ENCODE measurements at regions of chr20 and their contacts with region 1.

Region 1: DNA sequence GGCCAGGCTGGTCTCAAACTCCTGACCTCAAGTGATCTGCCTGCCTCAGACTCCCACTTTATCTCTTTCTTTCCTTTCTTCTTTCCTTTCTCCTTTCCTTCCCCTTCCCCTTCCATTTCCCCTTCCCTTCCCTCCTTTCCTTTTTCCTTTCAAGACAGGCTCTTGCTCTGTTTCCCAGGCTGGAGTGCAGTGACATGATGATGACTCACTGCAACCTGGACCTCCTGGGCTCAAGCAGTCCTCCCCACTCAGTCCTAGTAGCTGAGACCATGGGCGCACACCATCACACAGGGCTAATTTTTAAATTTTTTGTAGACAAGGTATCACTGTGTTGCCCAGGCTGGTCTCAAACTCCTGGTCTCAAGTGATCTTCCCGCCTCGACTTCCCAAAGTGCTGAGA is 377.6 kb upstream of the ZFP64 start:
- DNase-seq: no peak
- H3K4me3 ChIP-seq: no peak overlapping the region
- CTCF ChIP-seq: no peak

Region 2: DNA sequence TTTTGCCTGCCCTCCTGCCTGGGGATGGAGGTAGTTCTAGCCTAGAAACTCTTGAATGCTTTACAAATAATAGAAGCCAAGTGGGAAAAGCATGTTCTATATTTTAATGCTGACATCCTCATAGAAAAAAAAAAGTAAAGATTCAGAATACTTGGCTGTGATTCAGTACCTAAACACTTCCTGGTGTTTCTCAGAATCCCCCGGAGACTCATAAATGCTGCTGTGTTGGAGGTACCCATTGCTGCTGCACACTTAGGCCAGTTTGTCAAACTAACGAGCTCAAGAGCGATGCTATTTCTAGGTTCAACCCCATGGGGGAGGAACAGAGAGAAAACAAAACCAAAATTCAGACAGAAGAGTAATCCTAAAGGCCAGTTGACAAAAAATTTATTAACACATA is 338.8 kb before region 1 on chr20:
- in situ Hi-C with region 1: no loop called
- DNase-seq: no peak
- H3K4me3 ChIP-seq: no peak overlapping the region
- CTCF ChIP-seq: no peak

Region 3: DNA sequence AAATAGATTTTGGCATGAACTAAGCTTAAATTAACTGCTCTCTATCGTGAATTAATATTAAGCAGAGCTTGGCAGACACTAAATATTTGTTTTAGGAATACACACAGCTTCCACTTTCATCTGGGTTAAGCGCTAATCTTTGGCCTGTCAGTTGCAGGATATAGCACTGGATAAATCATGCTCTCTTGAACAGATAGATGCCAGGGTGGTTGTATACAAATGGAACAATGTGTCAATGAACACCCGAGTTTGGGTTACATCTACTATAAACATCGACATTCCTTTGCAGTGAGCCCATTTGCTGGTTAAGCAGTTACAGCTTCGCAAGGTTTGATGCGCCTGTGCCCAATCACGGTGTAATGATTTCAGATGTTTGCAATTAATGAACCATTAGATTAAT is 39.4 kb before region 1 on chr20:
- in situ Hi-C with region 1: loop called (anchors 5 kb)
- DNase-seq: no peak
- H3K4me3 ChIP-seq: no peak overlapping the region
- CTCF ChIP-seq: no peak

Region 4: DNA sequence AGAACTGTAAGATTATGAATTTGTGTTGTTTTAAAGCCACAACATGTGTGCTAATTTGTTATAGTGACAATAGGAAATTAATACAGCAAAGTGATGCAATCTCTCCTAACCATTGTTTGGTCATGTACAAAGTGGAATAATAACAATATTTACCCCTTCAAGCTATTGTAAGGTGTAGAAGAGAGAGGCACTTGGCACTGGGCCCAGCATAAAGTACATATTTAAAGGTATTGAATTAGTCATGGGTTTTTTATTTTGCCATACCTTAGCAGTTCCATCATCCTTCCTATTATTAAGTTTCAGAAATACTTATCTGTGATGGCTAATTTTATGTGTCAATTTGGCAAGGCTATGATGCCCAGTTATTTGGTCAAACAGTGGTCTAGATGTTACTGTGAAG is 80.5 kb after region 1 on chr20:
- in situ Hi-C with region 1: no loop called
- DNase-seq: no peak
- H3K4me3 ChIP-seq: no peak overlapping the region
- CTCF ChIP-seq: no peak

Measured in astrocyte of the cerebellum (primary cell).